ENCODE measurements at regions of chr18 and their contacts with region 1.

Region 1: DNA sequence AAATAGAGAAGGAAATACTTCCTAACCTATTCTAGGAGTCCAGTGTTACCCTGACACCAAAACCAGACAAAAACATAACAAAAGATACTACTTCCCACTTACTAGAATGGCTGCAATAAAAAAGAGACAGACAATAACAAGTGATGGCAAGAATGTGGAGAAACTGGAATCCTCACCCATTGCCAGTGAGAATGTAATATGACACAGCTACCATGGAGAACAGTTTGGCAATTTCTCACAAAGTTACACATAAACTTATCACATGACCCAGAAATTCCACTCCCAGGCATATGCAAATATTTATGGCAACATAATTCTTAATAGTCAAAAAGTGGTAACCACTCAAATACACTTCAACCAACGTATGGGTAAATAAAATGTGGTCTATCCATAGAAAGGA is 209.8 kb upstream of the CTAGE1 start:
- DNase-seq: no peak
- ATAC-seq: no peak
- H3K4me3 ChIP-seq: no peak overlapping the region
- H3K27ac ChIP-seq: no peak overlapping the region
- H3K4me1 ChIP-seq: no peaks in the 10 kb centered on the region
- H3K27me3 ChIP-seq: no peaks in the 10 kb centered on the region
- CTCF ChIP-seq: no peak
- POLR2A ChIP-seq: no peak

Region 2: GRCh38 chr18:22517356-22517755 is 110.2 kb before region 1 on chr18:
- intact Hi-C with region 1: no loop called
- DNase-seq: no peak
- ATAC-seq: peak; percentile 51 to 89 (median 80)
- H3K4me3 ChIP-seq: no peak overlapping the region
- H3K27ac ChIP-seq: peak overlapping the region in 3 of 12 donors; percentile 8 to 59 (median 24)
- H3K4me1 ChIP-seq: peaks cover 0 to 26% (median 9%) of the 10 kb centered on the region in 12 donors
- H3K27me3 ChIP-seq: no peaks in the 10 kb centered on the region
- CTCF ChIP-seq: no peak
- POLR2A ChIP-seq: no peak

Region 3: GRCh38 chr18:22674272-22674671 is 46.7 kb after region 1 on chr18:
- intact Hi-C with region 1: loop called in 1 of 10 experiments (anchors 10 kb)
- DNase-seq: no peak
- ATAC-seq: no peak
- H3K4me3 ChIP-seq: no peak overlapping the region
- H3K27ac ChIP-seq: no peak overlapping the region
- H3K4me1 ChIP-seq: no peaks in the 10 kb centered on the region
- H3K27me3 ChIP-seq: no peaks in the 10 kb centered on the region
- CTCF ChIP-seq: no peak
- POLR2A ChIP-seq: no peak